Activated CD8-positive, alpha-beta T cell treated with anti-CD3 and anti-CD28 coated beads, Interleukin-2, amount 10 ng/mL, durations not matched to agents 7 days and 5 days (primary cell): ENCODE measurements at regions of chr1 and their contacts with region 1.

Region 1: GRCh38 chr1:28437264-28437932 is 67.9 kb downstream of the PHACTR4 start:
- DNase-seq: no peak
- ATAC-seq: no peak
- H3K4me3 Mint-ChIP-seq: peak overlapping the region; percentile 56
- H3K27ac Mint-ChIP-seq: no peak overlapping the region
- H3K4me1 Mint-ChIP-seq: peaks cover 23% of the 10 kb centered on the region
- H3K27me3 Mint-ChIP-seq: no peaks in the 10 kb centered on the region

Region 2: GRCh38 chr1:28322194-28322593 is 115.2 kb before region 1 on chr1:
- CTCF ChIA-PET with region 1: no interaction called
- POLR2A ChIA-PET with region 1: no interaction called
- DNase-seq: no peak
- ATAC-seq: no peak
- H3K4me3 Mint-ChIP-seq: no peak overlapping the region
- H3K27ac Mint-ChIP-seq: no peak overlapping the region
- H3K4me1 Mint-ChIP-seq: no peaks in the 10 kb centered on the region
- H3K27me3 Mint-ChIP-seq: peaks cover 5% of the 10 kb centered on the region

Region 3: GRCh38 chr1:28341591-28341990 is 95.8 kb before region 1 on chr1:
- CTCF ChIA-PET with region 1: no interaction called
- POLR2A ChIA-PET with region 1: no interaction called
- DNase-seq: no peak
- ATAC-seq: no peak
- H3K4me3 Mint-ChIP-seq: no peak overlapping the region
- H3K27ac Mint-ChIP-seq: no peak overlapping the region
- H3K4me1 Mint-ChIP-seq: peaks cover 20% of the 10 kb centered on the region
- H3K27me3 Mint-ChIP-seq: no peaks in the 10 kb centered on the region

Region 4: GRCh38 chr1:28395181-28395580 is 42.2 kb before region 1 on chr1:
- CTCF ChIA-PET with region 1: no interaction called
- POLR2A ChIA-PET with region 1: no interaction called
- DNase-seq: no peak
- ATAC-seq: no peak
- H3K4me3 Mint-ChIP-seq: no peak overlapping the region
- H3K27ac Mint-ChIP-seq: no peak overlapping the region
- H3K4me1 Mint-ChIP-seq: peaks cover 3% of the 10 kb centered on the region
- H3K27me3 Mint-ChIP-seq: no peaks in the 10 kb centered on the region

Region 5: GRCh38 chr1:28412731-28413130 is 24.7 kb before region 1 on chr1:
- CTCF ChIA-PET with region 1: interaction called, 11 read pairs
- POLR2A ChIA-PET with region 1: interaction called, 3 read pairs
- DNase-seq: no peak
- ATAC-seq: no peak
- H3K4me3 Mint-ChIP-seq: no peak overlapping the region
- H3K27ac Mint-ChIP-seq: no peak overlapping the region
- H3K4me1 Mint-ChIP-seq: peaks cover 14% of the 10 kb centered on the region
- H3K27me3 Mint-ChIP-seq: no peaks in the 10 kb centered on the region